Activated T-helper 1 cell treated with anti-CD3 and anti-CD28 coated beads, Interleukin-12 subunit alpha, Interleukin-12 subunit beta, Interleukin-2, Interleukin-4 antibody, amounts not matched to agents 30 ng/mL and 10 ng/mL and 1 ng/mL, durations not matched to agents 14 hours and 24 hours and 36 hours (primary cell): ENCODE measurements at regions of chr1 and their contacts with region 1.

Region 1: DNA sequence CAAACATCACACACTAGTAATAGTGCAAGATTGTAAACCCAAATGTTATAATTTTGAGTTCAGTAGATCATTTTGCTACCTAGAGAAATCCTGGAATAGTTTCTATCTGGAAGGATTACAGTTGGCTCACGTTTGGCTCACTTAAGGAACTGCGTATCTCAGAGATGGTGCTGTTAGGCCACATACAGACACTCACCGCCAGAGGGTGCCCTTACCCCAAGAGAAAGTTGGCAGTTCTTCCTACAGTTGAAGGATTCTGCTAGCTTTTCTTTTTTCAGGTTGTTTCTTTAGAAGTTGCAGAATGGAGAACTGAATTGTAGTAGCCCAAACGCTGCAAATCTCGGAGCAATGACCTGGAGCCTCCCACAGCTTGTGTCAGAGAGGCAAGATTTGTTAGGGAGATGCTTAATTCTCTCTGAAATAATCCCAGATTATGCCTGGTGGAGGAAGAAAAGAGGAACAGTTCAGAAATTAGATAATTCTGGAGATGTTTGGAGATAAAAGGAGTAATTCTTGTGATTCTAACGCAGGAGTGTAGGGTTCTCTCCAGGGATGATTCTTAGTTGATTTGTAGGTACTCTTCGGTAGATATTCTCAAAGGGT is 87.9 kb upstream of the PAPPA2 start:
- DNase-seq: peak; percentile 22
- H3K4me3 Mint-ChIP-seq: no peak overlapping the region
- H3K27ac Mint-ChIP-seq: no peak overlapping the region
- H3K4me1 Mint-ChIP-seq: no peaks in the 10 kb centered on the region
- H3K27me3 Mint-ChIP-seq: no peaks in the 10 kb centered on the region

Region 2: GRCh38 chr1:175600721-175601440 is 774.2 kb before region 1 on chr1:
- intact Hi-C with region 1: no loop called
- DNase-seq: peak; percentile 29
- H3K4me3 Mint-ChIP-seq: peak overlapping the region; percentile 20
- H3K27ac Mint-ChIP-seq: peak overlapping the region; percentile 25
- H3K4me1 Mint-ChIP-seq: peaks cover 41% of the 10 kb centered on the region
- H3K27me3 Mint-ChIP-seq: peaks cover 14% of the 10 kb centered on the region

Region 3: GRCh38 chr1:176022574-176022973 is 352.5 kb before region 1 on chr1:
- intact Hi-C with region 1: no loop called
- DNase-seq: no peak
- H3K4me3 Mint-ChIP-seq: no peak overlapping the region
- H3K27ac Mint-ChIP-seq: no peak overlapping the region
- H3K4me1 Mint-ChIP-seq: peaks cover 4% of the 10 kb centered on the region
- H3K27me3 Mint-ChIP-seq: no peaks in the 10 kb centered on the region

Region 4: GRCh38 chr1:176559878-176560277 is 184.8 kb after region 1 on chr1:
- intact Hi-C with region 1: loop called (anchors 10 kb)
- DNase-seq: no peak
- H3K4me3 Mint-ChIP-seq: no peak overlapping the region
- H3K27ac Mint-ChIP-seq: no peak overlapping the region
- H3K4me1 Mint-ChIP-seq: no peaks in the 10 kb centered on the region
- H3K27me3 Mint-ChIP-seq: no peaks in the 10 kb centered on the region

Region 5: DNA sequence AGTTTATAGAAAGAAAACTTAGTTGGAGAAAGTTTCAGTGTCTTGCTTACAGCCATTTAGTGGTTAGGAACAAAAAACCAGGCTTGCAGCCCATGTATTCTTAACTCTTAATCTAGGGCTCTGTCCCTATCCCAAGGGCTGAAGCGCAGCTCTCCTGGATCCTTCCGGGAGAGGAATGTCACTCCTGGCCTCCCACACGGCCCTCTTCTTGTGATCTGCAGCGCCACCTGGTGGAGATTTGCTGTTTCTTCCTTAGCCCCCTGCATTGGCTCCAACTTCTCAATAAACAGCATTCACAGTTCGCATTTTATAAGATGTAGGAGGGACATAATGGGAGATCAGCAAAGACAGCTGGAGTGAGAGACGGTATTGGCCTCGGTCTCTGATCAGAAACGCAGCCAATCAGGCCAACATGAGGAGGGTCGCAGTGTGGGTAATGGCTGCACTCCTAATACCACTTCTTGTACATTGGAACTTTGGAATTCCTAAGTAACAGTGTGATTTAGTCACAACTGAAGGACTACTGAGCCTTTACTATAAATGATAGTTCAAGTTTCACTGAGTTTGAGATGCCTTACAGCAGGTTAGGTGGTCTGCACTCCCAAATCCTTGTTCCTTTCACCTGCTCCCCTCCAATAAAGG is 506.0 kb after region 1 on chr1:
- intact Hi-C with region 1: loop called (anchors 1 kb)
- DNase-seq: no peak
- H3K4me3 Mint-ChIP-seq: no peak overlapping the region
- H3K27ac Mint-ChIP-seq: no peak overlapping the region
- H3K4me1 Mint-ChIP-seq: no peaks in the 10 kb centered on the region
- H3K27me3 Mint-ChIP-seq: no peaks in the 10 kb centered on the region

Region 6: DNA sequence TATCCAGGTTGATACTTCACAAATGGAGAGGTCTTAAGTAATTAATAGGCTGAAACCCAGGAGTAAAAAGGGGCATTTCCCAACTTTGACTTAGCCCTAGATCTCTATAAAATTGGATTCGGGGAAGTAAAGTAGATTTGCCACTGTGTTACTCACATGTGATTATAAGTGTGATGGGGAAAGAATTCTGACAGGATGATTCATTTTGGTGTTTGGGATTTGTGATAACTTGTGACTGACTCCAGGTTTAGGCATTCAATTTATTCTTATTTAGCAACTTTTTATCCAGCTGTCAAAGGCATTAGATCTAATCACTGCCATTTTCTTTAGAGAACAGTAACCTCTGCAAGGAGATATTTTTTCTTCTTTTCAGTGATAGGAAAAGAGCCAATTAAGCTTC is 614.0 kb after region 1 on chr1:
- intact Hi-C with region 1: no loop called
- DNase-seq: no peak
- H3K4me3 Mint-ChIP-seq: no peak overlapping the region
- H3K27ac Mint-ChIP-seq: no peak overlapping the region
- H3K4me1 Mint-ChIP-seq: no peaks in the 10 kb centered on the region
- H3K27me3 Mint-ChIP-seq: no peaks in the 10 kb centered on the region

Region 7: GRCh38 chr1:177948336-177948972 is 1573.4 kb after region 1 on chr1:
- intact Hi-C with region 1: loop called (anchors 10 kb)
- DNase-seq: no peak
- H3K4me3 Mint-ChIP-seq: no peak overlapping the region
- H3K27ac Mint-ChIP-seq: no peak overlapping the region
- H3K4me1 Mint-ChIP-seq: no peaks in the 10 kb centered on the region
- H3K27me3 Mint-ChIP-seq: no peaks in the 10 kb centered on the region